PC-9 (cell line): ENCODE measurements at regions of chr12 and their contacts with region 1.

Region 1: GRCh38 chr12:100573292-100574186 is at the start of gene GAS2L3:
- DNase-seq: peak; percentile 71 to 89
- H3K4me3 ChIP-seq: peak within 1 kb of the TSS; percentile 82
- H3K27ac ChIP-seq: peak within 1 kb of the TSS; percentile 37
- H3K4me1 ChIP-seq: peaks cover 11% of the 10 kb centered on the region
- H3K27me3 ChIP-seq: no peaks in the 10 kb centered on the region
- CTCF ChIP-seq: no peak
- total RNA-seq, gene GAS2L3: 28.6 and 31.9 TPM in 2 replicates

Region 2: DNA sequence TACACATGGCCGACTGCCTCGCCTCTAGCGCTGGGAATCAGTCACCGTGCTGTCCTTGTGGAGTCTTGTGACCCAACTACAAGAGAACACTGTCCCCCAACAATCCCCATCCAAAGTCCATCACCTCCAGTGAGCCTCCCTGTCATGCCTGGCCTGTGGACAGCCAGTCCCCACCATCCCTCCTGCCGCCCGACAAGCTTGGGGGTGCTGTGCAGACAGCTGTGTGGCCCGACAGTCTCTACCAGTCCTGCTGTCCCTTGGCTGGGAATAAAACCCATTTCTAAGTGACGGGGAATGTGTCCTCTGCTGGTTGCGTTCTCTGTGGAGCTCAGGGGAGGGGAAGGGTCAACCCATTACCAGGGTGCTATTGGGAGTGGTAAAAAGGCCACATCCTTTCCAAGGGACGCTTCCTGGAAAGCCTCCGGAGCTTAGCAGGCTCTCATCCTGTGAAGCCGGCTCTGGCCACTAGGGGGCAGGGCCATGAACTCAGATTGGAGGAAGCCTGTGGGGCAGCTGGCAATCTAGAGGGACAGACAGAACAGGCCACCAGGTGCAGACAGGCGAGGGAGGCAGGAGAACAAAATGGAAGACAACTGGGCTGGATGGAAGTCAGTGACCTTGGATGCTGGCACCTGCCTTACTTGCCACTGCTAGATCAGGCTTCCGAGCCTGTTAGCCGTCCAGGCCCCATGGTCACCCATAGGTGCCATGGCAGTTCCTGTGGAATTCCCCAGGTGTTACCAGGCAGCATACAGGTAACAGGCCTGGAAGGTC is 418.9 kb before region 1 on chr12:
- CTCF ChIA-PET with region 1: no interaction called
- POLR2A ChIA-PET with region 1: interaction called, 11 read pairs
- intact Hi-C with region 1: no loop called
- DNase-seq: peak in 1 of 2 experiments; percentile 58
- H3K4me3 ChIP-seq: no peak overlapping the region
- H3K27ac ChIP-seq: no peak overlapping the region
- H3K4me1 ChIP-seq: no peaks in the 10 kb centered on the region
- H3K27me3 ChIP-seq: no peaks in the 10 kb centered on the region
- CTCF ChIP-seq: peak; percentile 95

Region 3: DNA sequence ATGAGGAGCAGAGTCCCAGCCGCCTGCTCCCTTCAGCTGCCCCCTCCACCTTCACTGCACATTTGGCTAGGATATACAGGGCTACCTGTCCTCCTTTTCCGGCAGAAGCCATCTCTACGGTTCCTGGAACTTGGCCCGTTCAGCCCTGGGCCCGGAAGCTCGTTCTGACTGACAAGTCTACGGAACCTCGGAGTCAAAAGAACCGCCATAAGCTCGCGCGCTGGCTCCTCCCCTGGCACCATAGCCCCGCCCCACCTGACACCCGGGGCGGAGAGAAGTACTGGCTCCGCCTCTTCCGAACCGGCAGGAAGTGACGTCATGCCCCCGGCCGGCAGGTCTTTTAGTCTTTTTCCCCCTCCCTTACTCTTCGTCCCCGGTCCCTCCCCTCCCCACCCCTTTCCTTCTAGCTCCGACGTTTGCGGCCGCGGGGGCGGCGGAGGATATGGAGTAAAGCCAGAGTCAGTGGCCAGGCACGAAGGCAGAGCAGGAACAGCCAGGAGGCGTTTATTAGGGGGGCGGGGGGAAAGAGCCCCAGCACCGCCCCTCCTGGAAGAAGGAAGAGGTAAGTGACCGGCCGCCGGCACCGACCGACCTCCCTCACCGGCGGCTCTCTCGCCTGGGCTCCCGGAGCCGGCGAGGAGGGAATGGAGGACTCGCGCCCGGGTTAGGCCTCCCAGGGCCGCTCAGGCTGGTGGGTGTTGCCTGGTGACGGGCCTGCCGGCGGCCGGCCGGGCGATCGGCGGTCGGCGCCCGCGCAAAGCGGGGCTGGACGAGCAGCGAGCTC is 306.5 kb before region 1 on chr12 and contains the starts of genes DEPDC4 and SCYL2:
- CTCF ChIA-PET with region 1: no interaction called
- POLR2A ChIA-PET with region 1: no interaction called
- intact Hi-C with region 1: loop called (anchors 1 kb)
- DNase-seq: peak; percentile 89 to 92
- H3K4me3 ChIP-seq: peak within 1 kb of the TSS; percentile 76
- H3K27ac ChIP-seq: peak within 1 kb of the TSS; percentile 87
- H3K4me1 ChIP-seq: peaks cover 21% of the 10 kb centered on the region
- H3K27me3 ChIP-seq: no peaks in the 10 kb centered on the region
- CTCF ChIP-seq: no peak
- total RNA-seq, gene DEPDC4: 1.8 and 2.9 TPM in 2 replicates
- total RNA-seq, gene SCYL2: 31.0 and 41.1 TPM in 2 replicates

Region 4: GRCh38 chr12:100539202-100539601 is 34.3 kb before region 1 on chr12:
- CTCF ChIA-PET with region 1: no interaction called
- POLR2A ChIA-PET with region 1: interaction called, 10 read pairs
- intact Hi-C with region 1: no loop called
- DNase-seq: peak in 1 of 2 experiments; percentile 18
- H3K4me3 ChIP-seq: no peak overlapping the region
- H3K27ac ChIP-seq: no peak overlapping the region
- H3K4me1 ChIP-seq: no peaks in the 10 kb centered on the region
- H3K27me3 ChIP-seq: peaks cover 62% of the 10 kb centered on the region
- CTCF ChIP-seq: no peak

Region 5: GRCh38 chr12:100584256-100584655 is 10.7 kb after region 1 on chr12:
- CTCF ChIA-PET with region 1: no interaction called
- POLR2A ChIA-PET with region 1: no interaction called
- intact Hi-C with region 1: no loop called
- DNase-seq: no peak
- H3K4me3 ChIP-seq: no peak overlapping the region
- H3K27ac ChIP-seq: no peak overlapping the region
- H3K4me1 ChIP-seq: no peaks in the 10 kb centered on the region
- H3K27me3 ChIP-seq: no peaks in the 10 kb centered on the region
- CTCF ChIP-seq: no peak

Region 6: GRCh38 chr12:100668945-100669536 is 95.5 kb after region 1 on chr12:
- CTCF ChIA-PET with region 1: interaction called, 14 read pairs
- POLR2A ChIA-PET with region 1: no interaction called
- intact Hi-C with region 1: no loop called
- DNase-seq: peak; percentile 43 to 53
- H3K4me3 ChIP-seq: no peak overlapping the region
- H3K27ac ChIP-seq: no peak overlapping the region
- H3K4me1 ChIP-seq: no peaks in the 10 kb centered on the region
- H3K27me3 ChIP-seq: peaks cover 58% of the 10 kb centered on the region
- CTCF ChIP-seq: peak; percentile 86